Aorta (tissue), 5 donors: ENCODE measurements at regions of chr11 and their contacts with region 1.

Region 1: GRCh38 chr11:36354221-36355003 is 58.3 kb downstream of the PRR5L start:
- DNase-seq: no peak
- ATAC-seq: no peak
- H3K4me3 ChIP-seq: no peak overlapping the region
- H3K27ac ChIP-seq: no peak overlapping the region
- H3K4me1 ChIP-seq: no peaks in the 10 kb centered on the region
- H3K27me3 ChIP-seq: no peaks in the 10 kb centered on the region

Region 2: GRCh38 chr11:36149538-36150242 is 204.7 kb before region 1 on chr11:
- intact Hi-C with region 1: no loop called
- DNase-seq: peak; percentile 65 to 82
- ATAC-seq: peak; percentile 88
- H3K4me3 ChIP-seq: no peak overlapping the region
- H3K27ac ChIP-seq: no peak overlapping the region
- H3K4me1 ChIP-seq: no peaks in the 10 kb centered on the region
- H3K27me3 ChIP-seq: no peaks in the 10 kb centered on the region

Region 3: DNA sequence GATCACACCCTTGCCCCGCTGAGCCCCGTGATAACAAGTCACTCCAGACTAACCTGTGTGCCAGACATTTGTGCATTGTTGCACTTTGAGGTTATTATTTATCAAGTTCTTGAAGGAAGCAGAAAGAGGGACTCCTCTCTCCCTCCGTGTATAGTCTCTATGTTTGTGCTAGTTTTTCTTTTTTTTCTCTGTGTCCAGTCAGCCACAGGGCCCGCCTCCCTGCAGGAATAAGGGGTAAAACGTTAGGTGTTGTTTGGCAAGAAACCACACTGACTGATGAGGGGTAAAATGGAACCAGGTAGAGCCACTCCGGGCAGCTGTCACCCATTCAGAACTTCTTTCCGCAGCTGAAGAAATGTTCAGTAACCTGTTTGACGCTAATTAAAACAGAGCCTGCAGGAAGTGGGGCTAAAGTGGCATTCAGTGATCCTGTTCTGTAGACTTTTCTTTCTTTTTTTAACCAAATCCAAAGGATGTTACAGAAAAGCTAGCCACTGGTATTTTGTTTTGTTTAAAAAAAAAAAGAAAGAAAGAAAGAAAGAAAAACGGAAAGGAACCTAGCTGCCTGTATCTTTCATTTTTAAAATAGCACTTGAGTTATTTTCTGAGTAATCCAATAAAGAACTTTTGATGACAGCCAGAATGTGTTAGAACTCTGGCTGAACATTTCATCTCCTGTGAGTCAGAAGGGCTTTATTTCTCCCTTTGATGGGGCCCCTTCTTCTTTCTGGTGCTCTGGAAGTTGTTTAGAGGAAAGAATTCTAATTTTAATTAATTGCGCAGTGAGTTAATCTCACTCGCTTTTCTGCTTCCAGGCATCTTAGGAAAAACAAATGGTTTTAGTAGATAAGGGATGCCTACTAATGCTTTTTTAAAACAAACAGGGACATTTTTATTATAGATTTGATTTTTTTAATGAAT is 123.4 kb before region 1 on chr11:
- intact Hi-C with region 1: no loop called
- DNase-seq: no peak
- ATAC-seq: peak; percentile 51
- H3K4me3 ChIP-seq: no peak overlapping the region
- H3K27ac ChIP-seq: no peak overlapping the region
- H3K4me1 ChIP-seq: peaks cover 0 to 2% of the 10 kb centered on the region in 2 donors
- H3K27me3 ChIP-seq: no peaks in the 10 kb centered on the region

Region 4: DNA sequence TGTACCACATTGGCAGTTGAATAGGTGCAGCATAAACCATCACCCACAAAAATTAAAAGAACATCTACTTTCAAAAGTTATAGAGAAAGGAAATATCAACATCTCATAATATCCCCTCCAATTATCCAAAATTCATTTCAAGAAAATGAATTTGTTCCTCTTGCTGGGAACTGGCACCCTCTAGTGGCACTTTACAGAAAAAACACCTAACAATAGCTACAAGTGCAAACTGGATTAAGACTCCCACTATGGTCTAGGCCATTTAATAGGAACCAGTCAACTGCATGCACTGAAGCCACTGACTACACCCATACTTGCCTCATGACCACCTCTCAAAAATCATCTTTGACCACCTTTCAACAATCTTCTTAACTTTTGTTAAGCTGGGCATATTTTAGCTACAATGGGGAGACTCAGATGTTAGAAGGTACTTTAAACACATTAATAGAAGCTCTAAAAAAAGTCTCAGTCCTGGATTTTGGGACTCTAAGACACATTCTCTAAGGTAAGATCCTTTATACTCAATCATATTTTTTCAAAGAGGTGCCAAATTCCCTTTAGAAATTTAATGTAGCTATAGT is 138.4 kb after region 1 on chr11:
- intact Hi-C with region 1: loop called in 1 of 2 experiments (anchors 10 kb)
- DNase-seq: no peak
- ATAC-seq: no peak
- H3K4me3 ChIP-seq: no peak overlapping the region
- H3K27ac ChIP-seq: no peak overlapping the region
- H3K4me1 ChIP-seq: no peaks in the 10 kb centered on the region
- H3K27me3 ChIP-seq: no peaks in the 10 kb centered on the region

Region 5: DNA sequence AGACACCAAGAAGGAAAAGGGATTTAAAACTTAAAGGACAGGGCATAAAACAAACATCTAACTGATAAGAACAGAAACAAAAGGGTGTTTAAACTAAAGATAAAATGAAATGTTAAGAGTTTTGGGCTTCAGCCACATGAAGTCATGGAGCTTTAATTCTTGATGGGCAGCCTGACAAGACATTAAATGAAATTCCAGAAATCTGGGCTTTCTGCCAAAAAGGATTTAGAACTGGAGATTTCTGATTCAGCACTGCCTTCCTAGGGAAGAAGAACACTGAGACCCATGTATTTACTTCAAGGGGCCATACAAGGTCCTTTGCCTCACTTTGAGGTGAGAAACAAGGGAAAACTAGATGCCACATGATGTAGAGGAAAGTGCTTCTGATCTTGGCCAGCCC is 599.6 kb after region 1 on chr11:
- intact Hi-C with region 1: no loop called
- DNase-seq: no peak
- ATAC-seq: no peak
- H3K4me3 ChIP-seq: no peak overlapping the region
- H3K27ac ChIP-seq: no peak overlapping the region
- H3K4me1 ChIP-seq: no peaks in the 10 kb centered on the region
- H3K27me3 ChIP-seq: no peaks in the 10 kb centered on the region